Activated CD4-positive, alpha-beta memory T cell treated with anti-CD3 and anti-CD28 coated beads for 36 hours (primary cell): ENCODE measurements at regions of chr14 and their contacts with region 1.

Region 1: DNA sequence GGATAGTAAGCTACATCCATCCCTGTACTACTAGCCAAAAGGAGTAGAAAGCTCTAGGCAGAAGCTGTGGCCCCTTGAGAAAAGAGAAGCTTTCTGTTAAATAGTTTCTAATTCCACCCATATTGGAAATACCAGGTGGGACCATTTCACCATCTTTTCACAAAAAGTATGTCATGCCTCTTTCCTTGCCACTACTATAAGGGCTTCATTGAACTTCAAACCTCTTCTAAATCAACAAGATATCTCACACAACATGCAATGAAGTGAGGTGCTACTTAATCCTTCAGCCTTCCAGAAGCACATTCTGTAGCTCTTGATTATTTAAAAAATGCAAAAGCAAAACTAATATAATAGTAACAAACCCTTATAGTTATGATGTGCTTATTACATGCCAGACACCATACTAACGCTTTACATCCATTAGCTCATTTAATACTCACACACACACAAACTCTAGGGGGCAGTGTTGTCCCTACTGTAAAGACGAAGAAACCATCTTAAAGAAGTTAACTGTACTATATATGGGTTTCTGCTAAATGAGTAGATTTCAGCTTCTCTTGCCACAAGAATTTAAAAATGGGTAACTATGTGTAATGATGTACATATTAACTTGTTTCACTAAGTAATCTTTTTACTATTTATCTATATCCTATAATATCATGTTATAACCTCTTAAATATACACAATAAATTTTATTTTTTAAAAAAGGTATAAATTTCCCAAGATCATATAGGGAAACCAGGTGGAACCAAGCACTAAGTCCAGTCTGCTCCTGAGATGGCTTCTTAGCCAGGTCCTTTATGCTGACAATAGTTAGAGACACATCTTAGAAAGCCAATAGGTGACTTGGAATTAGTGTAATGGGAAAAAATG is 124.4 kb downstream of the RPS29 start:
- DNase-seq: peak; percentile 46
- H3K4me3 Mint-ChIP-seq: no peak overlapping the region
- H3K27ac Mint-ChIP-seq: no peak overlapping the region
- H3K4me1 Mint-ChIP-seq: no peaks in the 10 kb centered on the region
- H3K27me3 Mint-ChIP-seq: no peaks in the 10 kb centered on the region

Region 2: GRCh38 chr14:49438256-49438770 is 23.5 kb before region 1 on chr14:
- CTCF ChIA-PET with region 1: interaction called, 22 read pairs
- POLR2A ChIA-PET with region 1: no interaction called
- intact Hi-C with region 1: no loop called
- DNase-seq: no peak
- H3K4me3 Mint-ChIP-seq: no peak overlapping the region
- H3K27ac Mint-ChIP-seq: no peak overlapping the region
- H3K4me1 Mint-ChIP-seq: no peaks in the 10 kb centered on the region
- H3K27me3 Mint-ChIP-seq: peaks cover 8% of the 10 kb centered on the region

Region 3: GRCh38 chr14:49479432-49479831 is 17.7 kb after region 1 on chr14:
- CTCF ChIA-PET with region 1: interaction called, 13 read pairs
- POLR2A ChIA-PET with region 1: no interaction called
- intact Hi-C with region 1: no loop called
- DNase-seq: no peak
- H3K4me3 Mint-ChIP-seq: no peak overlapping the region
- H3K27ac Mint-ChIP-seq: no peak overlapping the region
- H3K4me1 Mint-ChIP-seq: peaks cover 4% of the 10 kb centered on the region
- H3K27me3 Mint-ChIP-seq: peaks cover 5% of the 10 kb centered on the region

Region 4: GRCh38 chr14:49550286-49551184 is 88.8 kb after region 1 on chr14:
- CTCF ChIA-PET with region 1: interaction called, 13 read pairs
- POLR2A ChIA-PET with region 1: no interaction called
- intact Hi-C with region 1: no loop called
- DNase-seq: no peak
- H3K4me3 Mint-ChIP-seq: no peak overlapping the region
- H3K27ac Mint-ChIP-seq: no peak overlapping the region
- H3K4me1 Mint-ChIP-seq: no peaks in the 10 kb centered on the region
- H3K27me3 Mint-ChIP-seq: no peaks in the 10 kb centered on the region

Region 5: DNA sequence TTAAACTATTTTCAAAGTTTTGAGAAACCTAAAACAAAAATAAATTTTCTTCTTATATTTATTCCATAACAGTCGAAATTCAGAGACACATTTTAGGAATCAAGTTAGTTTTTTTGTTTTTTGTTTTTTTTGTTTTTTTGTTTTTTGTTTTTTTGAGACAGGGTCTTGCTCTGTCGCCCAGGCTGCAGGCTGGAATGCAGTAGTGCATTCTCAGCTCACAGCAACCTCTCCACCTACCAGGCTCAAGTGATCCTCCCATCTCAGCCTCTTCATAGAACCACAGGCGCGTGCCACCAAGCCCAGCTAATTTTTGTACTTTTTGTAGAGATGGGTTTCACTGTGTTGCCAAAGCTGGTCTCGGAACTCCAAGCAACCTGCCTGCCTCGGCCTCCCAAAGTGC is 191.7 kb after region 1 on chr14:
- CTCF ChIA-PET with region 1: no interaction called
- POLR2A ChIA-PET with region 1: no interaction called
- intact Hi-C with region 1: no loop called
- DNase-seq: no peak
- H3K4me3 Mint-ChIP-seq: no peak overlapping the region
- H3K27ac Mint-ChIP-seq: no peak overlapping the region
- H3K4me1 Mint-ChIP-seq: no peaks in the 10 kb centered on the region
- H3K27me3 Mint-ChIP-seq: no peaks in the 10 kb centered on the region

Region 6: GRCh38 chr14:49767562-49768300 is 306.0 kb after region 1 on chr14 and contains the start of gene KLHDC2:
- CTCF ChIA-PET with region 1: interaction called, 11 read pairs
- POLR2A ChIA-PET with region 1: no interaction called
- intact Hi-C with region 1: no loop called
- DNase-seq: peak; percentile 94
- H3K4me3 Mint-ChIP-seq: peak within 1 kb of the TSS; percentile 88
- H3K27ac Mint-ChIP-seq: peak within 1 kb of the TSS; percentile 100
- H3K4me1 Mint-ChIP-seq: peaks cover 28% of the 10 kb centered on the region
- H3K27me3 Mint-ChIP-seq: no peaks in the 10 kb centered on the region
- total RNA-seq, gene KLHDC2: 27.8 to 28.2 TPM